PC-9 (cell line): ENCODE measurements at regions of chr4 and their contacts with region 1.

Region 1: GRCh38 chr4:68344049-68344448 is 5.8 kb downstream of the YTHDC1 start:
- DNase-seq: no peak
- H3K4me3 ChIP-seq: no peak overlapping the region
- H3K27ac ChIP-seq: no peak overlapping the region
- H3K4me1 ChIP-seq: peaks cover 23% of the 10 kb centered on the region
- H3K27me3 ChIP-seq: no peaks in the 10 kb centered on the region
- CTCF ChIP-seq: no peak

Region 2: DNA sequence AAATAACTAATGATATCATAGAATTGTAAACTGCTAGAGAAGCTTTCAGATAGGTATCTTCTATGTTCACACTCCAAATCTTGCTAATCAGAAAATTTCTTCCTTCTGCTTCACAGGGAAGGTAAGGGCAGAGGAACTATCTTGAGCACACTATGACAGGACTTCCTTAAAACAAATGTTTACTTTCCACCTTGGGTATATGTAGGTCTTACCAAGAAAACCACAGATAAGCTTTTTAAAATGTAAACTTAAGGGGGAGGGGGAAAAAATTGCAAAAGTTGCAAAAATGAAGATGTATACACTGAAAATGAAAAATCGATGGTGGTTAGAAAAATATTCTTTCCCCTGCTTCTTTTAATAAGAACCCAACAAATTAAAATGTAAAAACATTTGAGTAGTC is 25.0 kb before region 1 on chr4:
- CTCF ChIA-PET with region 1: no interaction called
- POLR2A ChIA-PET with region 1: interaction called, 15 read pairs
- intact Hi-C with region 1: no loop called
- DNase-seq: no peak
- H3K4me3 ChIP-seq: no peak overlapping the region
- H3K27ac ChIP-seq: no peak overlapping the region
- H3K4me1 ChIP-seq: no peaks in the 10 kb centered on the region
- H3K27me3 ChIP-seq: no peaks in the 10 kb centered on the region
- CTCF ChIP-seq: no peak